ENCODE measurements at regions of chr16 and their contacts with region 1.

Region 1: GRCh38 chr16:25569011-25569410 is 122.7 kb upstream of the HS3ST4 start:
- DNase-seq: no peak

Region 2: GRCh38 chr16:25614716-25615265 is 45.8 kb after region 1 on chr16:
- intact Hi-C with region 1: no loop called
- DNase-seq: no peak

Region 3: GRCh38 chr16:25643633-25644032 is 74.6 kb after region 1 on chr16:
- intact Hi-C with region 1: no loop called
- DNase-seq: no peak

Region 4: DNA sequence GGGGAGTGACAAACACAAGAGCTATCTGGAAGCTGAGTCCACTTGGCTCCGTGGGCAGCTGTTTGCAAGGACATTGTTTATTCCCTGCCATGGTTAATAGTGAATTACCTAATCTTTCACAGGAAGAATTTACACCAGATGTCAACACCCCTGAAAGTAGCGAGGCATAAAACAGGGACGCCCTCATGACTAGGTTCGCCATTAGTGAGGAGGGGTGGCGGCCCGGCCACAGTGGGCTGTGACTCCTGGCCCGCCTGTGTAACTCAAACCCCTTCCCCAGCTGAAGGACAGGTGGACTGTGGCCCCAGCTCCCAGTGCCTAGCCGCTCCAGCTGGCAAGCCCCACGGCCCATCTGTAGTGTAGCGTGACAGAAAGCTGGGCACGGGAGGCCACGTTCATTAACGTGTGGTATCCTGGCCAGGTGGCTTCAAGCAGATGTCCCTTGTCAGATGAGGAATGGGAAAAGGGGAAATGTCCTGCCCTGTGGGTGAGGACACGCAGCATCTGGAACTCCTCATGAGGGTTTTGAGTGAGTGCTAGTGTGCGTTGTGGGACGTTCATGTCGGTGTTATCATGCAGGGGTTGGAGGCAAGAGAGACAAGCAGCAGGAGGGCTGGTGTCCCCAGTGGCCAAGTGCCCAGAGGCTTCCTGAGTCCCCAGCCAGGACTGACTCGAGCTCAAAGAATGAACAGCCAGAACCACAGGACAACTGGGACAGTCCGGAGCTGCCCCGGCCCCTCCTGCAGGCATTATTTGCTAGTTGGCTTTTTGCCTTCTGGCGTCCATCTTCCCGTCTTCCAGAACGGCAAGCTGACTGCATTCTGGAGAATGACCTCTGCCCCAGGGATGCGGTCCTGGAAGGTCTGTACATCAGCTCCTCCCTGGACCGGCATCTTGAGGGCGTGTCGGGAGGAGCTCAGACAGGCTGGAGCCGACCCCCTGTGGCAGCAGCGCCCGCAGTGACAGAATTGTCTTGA is 1653.5 kb after region 1 on chr16:
- intact Hi-C with region 1: loop called in 1 of 2 experiments (anchors 5 kb)
- DNase-seq: no peak

Measured in posterior vena cava (tissue), 2 donors.